AG04449 (cell line): ENCODE measurements at regions of chr15 and their contacts with region 1.

Region 1: GRCh38 chr15:51281368-51281967 is 56.9 kb downstream of the CYP19A1 start:
- DNase-seq: no peak
- H3K4me3 ChIP-seq: no peak overlapping the region
- CTCF ChIP-seq: peak; percentile 87

Region 2: GRCh38 chr15:51267703-51268083 is 13.8 kb before region 1 on chr15:
- CTCF ChIA-PET with region 1: interaction called, 22 read pairs
- POLR2A ChIA-PET with region 1: no interaction called
- DNase-seq: no peak
- H3K4me3 ChIP-seq: peak overlapping the region; percentile 55
- CTCF ChIP-seq: no peak

Region 3: GRCh38 chr15:51299187-51300066 is 18.0 kb after region 1 on chr15:
- CTCF ChIA-PET with region 1: interaction called, 23 read pairs
- POLR2A ChIA-PET with region 1: no interaction called
- DNase-seq: no peak
- H3K4me3 ChIP-seq: no peak overlapping the region
- CTCF ChIP-seq: no peak

Region 4: DNA sequence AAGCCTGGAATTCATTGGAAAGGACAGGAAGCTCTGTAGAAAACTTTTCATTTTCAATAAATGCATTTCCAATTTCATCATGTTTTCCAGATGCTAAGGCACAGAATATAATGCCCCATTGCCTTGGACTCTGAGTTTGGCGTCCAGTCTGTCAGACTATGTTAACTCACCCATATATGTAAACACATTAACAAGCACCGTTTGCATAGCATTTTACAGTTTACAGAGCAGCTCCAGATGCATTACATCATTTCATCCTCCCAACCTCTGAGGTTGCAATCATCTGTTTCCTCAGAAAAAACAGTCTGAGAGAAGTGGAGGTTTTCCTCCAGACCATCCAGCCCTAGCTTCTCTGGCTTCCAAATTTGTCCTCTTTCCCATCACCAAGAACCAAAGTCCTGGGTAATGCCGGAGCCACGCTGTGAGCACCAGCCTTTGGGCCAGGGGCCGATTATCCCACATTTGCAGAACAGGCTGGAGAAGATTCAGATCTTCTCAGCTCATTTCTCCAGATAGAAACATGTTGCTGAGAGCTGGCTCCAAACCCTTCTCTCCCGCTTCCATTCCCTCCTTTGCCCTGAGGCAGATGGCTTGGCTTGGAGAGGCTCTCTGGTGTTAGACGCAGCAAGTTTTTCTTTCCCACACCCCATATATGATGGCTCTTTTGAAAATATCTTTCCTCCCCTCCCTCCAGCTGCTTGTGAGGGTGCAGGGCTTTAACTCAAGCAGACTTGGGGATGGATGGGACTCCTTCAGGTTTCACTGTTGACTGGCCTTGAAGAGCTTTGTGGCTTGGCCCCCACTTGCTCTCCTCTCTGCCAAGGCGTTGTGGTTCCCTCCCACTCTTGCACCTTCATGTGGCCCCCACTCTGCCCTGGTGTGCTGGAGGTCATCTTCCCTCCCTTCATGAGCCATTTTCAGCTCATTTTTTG is 31.0 kb after region 1 on chr15:
- CTCF ChIA-PET with region 1: no interaction called
- POLR2A ChIA-PET with region 1: no interaction called
- DNase-seq: no peak
- H3K4me3 ChIP-seq: no peak overlapping the region
- CTCF ChIP-seq: no peak

Region 5: DNA sequence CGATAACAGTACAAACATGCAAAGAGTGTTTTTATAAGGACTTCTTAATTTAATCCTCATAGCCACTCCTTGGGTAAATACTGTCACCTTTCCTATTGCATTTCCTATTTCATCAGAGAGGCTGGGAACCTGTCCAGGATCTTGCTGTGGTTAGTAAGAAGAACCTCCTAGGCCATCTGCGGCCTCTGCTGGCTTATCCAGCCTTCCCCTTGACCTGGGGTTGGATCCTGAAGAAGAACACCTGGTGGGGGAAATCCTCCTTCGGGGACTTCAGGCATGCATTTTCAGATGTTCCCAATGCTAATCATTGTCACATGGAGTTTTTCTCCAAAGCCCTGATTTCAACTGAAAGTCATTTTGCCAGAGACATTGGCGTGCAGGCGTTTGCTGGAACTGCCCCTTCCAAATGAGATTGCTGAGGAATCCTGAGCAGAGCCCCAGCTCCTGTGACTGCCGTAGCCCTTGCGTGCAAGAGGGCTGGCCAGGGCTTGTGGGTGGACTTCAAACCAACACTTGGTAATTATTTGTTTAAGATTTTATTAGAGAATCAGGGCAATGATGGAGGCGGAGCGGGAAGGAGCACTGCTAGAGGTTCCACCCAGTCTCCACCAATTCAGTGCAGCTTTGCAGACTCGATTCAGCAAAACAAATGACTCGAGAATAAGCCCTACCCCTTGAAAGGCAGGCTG is 85.6 kb after region 1 on chr15:
- CTCF ChIA-PET with region 1: interaction called, 10 read pairs
- POLR2A ChIA-PET with region 1: no interaction called
- DNase-seq: no peak
- H3K4me3 ChIP-seq: no peak overlapping the region
- CTCF ChIP-seq: no peak